Mammary epithelial cell (primary cell): ENCODE measurements at regions of chr15 and their contacts with region 1.

Region 1: GRCh38 chr15:33086507-33087121 is 107.9 kb downstream of the FMN1 start:
- DNase-seq: peak; percentile 58
- H3K4me3 ChIP-seq: no peak overlapping the region
- H3K27ac ChIP-seq: no peak overlapping the region
- H3K4me1 ChIP-seq: peaks cover 33% of the 10 kb centered on the region
- H3K27me3 ChIP-seq: no peaks in the 10 kb centered on the region
- CTCF ChIP-seq: peak; percentile 62 to 71

Region 2: DNA sequence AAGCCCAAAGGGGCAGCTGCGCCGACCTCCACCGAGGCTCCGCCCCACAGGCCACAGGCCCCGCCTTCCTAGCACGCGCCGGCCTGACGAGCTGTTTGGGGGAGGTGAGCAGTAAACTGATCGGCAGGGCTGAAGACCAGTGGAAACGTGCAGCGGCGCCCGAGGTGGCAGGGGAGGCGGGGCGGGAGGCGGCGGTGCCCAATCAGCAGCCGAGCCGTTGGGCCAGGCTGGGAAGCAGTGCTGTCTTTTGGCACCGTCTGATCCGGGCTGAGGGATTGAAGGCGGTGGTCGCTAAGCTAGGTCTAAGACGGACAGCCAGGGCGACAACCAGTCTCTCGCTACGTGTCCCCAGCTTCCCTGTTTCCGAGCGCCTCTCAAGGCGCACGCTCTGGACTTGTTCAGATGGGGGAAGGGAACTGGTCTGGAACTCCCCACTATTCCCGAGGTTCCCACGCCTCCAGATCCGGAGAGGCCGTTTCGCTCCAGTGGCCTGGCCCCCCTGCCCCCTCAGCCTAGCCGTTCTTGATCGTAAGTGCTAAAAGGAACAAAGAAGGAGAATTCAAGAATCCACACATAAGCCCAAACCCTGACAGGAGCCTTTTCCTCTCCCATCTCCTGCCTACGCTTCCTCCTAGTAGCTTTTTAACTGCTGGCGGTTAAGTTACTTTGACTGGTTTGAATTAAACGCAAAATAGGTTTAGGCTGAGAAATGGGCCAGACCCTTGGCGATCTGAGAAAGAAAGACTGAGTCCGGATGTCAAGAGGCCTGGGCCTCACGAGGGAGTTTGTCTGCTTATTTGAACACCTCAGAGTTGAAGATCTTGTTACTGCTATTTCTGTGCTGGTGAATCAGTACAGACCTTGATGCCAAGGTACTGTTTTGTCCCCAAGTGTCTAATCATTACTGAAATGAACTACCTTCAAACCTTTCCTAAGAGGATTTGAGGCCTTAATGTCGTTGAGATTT is 108.4 kb after region 1 on chr15 and contains the start of gene FMN1:
- CTCF ChIA-PET with region 1: no interaction called
- dilution Hi-C with region 1: loop called (anchors 5 kb)
- in situ Hi-C with region 1: no loop called
- intact Hi-C with region 1: no loop called
- DNase-seq: peak; percentile 91
- H3K4me3 ChIP-seq: peak within 1 kb of the TSS; percentile 35 to 55 (median 53)
- H3K27ac ChIP-seq: peak within 1 kb of the TSS; percentile 80
- H3K4me1 ChIP-seq: peaks cover 7% of the 10 kb centered on the region
- H3K27me3 ChIP-seq: no peaks in the 10 kb centered on the region
- CTCF ChIP-seq: no peak
- total RNA-seq, gene FMN1: 4.2 to 6.7 TPM

Region 3: GRCh38 chr15:33215941-33216872 is 129.6 kb after region 1 on chr15:
- CTCF ChIA-PET with region 1: no interaction called
- dilution Hi-C with region 1: no loop called
- in situ Hi-C with region 1: no loop called
- intact Hi-C with region 1: loop called (anchors 5 kb)
- DNase-seq: peak; percentile 51
- H3K4me3 ChIP-seq: no peak overlapping the region
- H3K27ac ChIP-seq: no peak overlapping the region
- H3K4me1 ChIP-seq: no peaks in the 10 kb centered on the region
- H3K27me3 ChIP-seq: no peaks in the 10 kb centered on the region
- CTCF ChIP-seq: peak; percentile 63 to 73

Region 4: DNA sequence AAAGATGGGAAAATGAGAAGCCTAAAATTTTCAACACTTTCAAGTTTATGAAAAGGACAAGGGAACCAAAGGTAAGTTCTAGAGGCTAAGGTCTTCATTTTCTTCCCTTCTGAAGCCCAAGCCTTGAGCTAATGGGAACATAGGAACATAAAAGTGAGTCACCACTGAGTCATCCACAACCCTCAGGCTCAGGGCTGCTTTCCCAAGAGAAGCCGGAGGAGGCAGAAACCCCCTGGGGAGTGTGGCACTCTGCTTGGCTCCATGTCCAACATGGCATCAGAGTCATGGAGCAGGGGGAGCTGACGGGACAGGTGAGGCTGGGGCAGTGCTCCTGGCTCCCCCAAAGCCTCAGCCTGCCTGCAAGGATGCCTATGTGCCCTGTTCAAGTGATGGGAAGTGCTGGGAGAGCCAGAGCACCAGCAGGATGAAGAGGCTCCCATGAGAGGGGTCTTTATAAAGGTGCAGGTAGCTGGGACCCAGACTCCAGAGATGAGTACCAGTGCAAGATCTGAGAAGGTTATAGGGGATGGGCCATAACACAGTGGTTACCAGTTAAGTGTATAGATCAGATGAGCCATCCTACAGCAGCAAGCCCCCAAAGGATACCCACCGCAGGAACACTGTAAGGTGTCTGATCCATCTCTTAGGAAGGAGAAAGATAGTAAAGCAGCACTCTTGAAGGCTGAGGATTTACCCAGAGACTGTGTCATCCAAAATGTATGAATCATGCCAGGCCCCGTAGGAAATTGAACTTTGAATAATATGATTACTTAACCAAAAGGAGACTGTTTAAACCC is 192.4 kb after region 1 on chr15:
- CTCF ChIA-PET with region 1: no interaction called
- dilution Hi-C with region 1: no loop called
- in situ Hi-C with region 1: no loop called
- intact Hi-C with region 1: loop called (anchors 2 kb)
- DNase-seq: peak; percentile 96
- H3K4me3 ChIP-seq: no peak overlapping the region
- H3K27ac ChIP-seq: peak overlapping the region; percentile 96
- H3K4me1 ChIP-seq: peaks cover 22% of the 10 kb centered on the region
- H3K27me3 ChIP-seq: no peaks in the 10 kb centered on the region
- CTCF ChIP-seq: peak in 1 of 2 donors; percentile 37

Region 5: GRCh38 chr15:33344111-33344510 is 257.5 kb after region 1 on chr15:
- CTCF ChIA-PET with region 1: no interaction called
- dilution Hi-C with region 1: no loop called
- in situ Hi-C with region 1: no loop called
- intact Hi-C with region 1: no loop called
- DNase-seq: no peak
- H3K4me3 ChIP-seq: no peak overlapping the region
- H3K27ac ChIP-seq: no peak overlapping the region
- H3K4me1 ChIP-seq: no peaks in the 10 kb centered on the region
- H3K27me3 ChIP-seq: peaks cover 1% of the 10 kb centered on the region
- CTCF ChIP-seq: no peak

Region 6: DNA sequence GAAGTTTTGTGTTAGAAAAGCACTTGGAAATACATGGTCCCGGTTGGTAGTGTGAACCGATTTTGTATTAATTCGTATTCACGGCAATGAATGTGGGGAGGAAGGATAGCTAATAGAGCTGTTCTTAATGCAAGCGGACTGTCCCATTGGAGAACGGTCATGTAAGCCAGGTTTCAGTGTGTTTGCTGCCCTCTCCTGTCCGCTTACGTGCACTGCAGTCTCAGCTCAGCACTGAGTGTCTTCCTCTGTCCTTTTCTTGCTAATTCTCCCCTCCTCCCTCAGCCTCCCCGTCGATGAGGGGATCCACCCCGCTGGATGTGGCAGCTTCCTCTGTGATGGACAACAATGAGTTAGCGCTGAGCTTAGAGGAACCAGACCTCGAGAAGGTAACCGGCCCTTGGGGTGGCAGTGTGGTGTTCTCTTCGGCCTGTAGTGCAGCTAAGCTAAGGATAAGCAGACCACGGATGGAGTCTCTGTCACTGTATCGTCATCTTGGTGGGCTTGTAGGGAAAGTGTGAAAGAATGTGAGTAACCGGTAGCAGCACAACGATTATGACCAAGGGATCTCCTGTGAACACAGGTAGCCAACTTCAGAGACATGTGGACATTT is 614.2 kb after region 1 on chr15:
- CTCF ChIA-PET with region 1: interaction called, 15 read pairs
- dilution Hi-C with region 1: no loop called
- in situ Hi-C with region 1: no loop called
- intact Hi-C with region 1: loop called (anchors 1 kb)
- DNase-seq: peak; percentile 62
- H3K4me3 ChIP-seq: no peak overlapping the region
- H3K27ac ChIP-seq: no peak overlapping the region
- H3K4me1 ChIP-seq: no peaks in the 10 kb centered on the region
- H3K27me3 ChIP-seq: no peaks in the 10 kb centered on the region
- CTCF ChIP-seq: peak; percentile 95 to 99

Region 7: GRCh38 chr15:34737477-34737876 is 1650.9 kb after region 1 on chr15:
- CTCF ChIA-PET with region 1: no interaction called
- dilution Hi-C with region 1: no loop called
- in situ Hi-C with region 1: no loop called
- intact Hi-C with region 1: no loop called
- DNase-seq: peak; percentile 35
- H3K4me3 ChIP-seq: no peak overlapping the region
- H3K27ac ChIP-seq: no peak overlapping the region
- H3K4me1 ChIP-seq: peaks cover 3% of the 10 kb centered on the region
- H3K27me3 ChIP-seq: peaks cover 3% of the 10 kb centered on the region
- CTCF ChIP-seq: no peak